ENCODE measurements at regions of chr3 and their contacts with region 1.

Region 1: GRCh38 chr3:15629860-15630597 is 28.5 kb downstream of the BTD start:
- DNase-seq: peak in 4 of 5 donors; percentile 40 to 61 (median 52)
- ATAC-seq: peak; percentile 73 to 95 (median 92)
- H3K4me3 ChIP-seq: peak overlapping the region in 9 of 12 donors; percentile 10 to 46 (median 30)
- H3K27ac ChIP-seq: peak overlapping the region in 7 of 12 donors; percentile 35 to 65 (median 48)
- H3K4me1 ChIP-seq: peaks cover 0 to 31% (median 20%) of the 10 kb centered on the region in 12 donors
- H3K27me3 ChIP-seq: no peaks in the 10 kb centered on the region
- CTCF ChIP-seq: peak; percentile 54 to 87 (median 79)
- POLR2A ChIP-seq: no peak

Region 2: DNA sequence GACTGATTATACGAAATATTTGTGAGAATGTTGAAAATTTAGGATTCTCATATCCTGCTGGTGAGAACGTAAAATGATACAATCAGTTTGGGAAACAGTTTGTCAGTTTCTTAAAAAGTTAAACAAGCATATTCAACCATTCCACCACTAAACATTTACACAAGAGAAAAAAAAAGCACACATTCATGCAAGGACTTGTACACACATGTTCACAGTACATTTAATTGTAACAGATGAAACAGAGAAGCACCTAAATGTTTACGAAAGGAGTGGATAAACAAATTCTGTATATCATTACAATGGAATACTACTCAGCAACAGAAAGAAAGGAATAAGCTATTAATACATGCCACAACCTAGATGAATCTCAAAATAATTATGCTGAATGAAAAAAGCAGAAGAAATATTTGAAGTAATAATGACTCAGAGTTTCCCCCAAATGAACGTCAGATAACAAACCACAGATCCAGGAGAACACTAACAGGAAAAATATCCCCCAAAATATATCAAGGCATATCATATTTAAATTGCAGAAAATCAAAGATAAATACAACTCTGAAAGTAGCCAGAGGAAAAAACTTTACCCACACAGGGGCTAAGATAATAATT is 153.4 kb after region 1 on chr3:
- intact Hi-C with region 1: no loop called
- DNase-seq: no peak
- ATAC-seq: no peak
- H3K4me3 ChIP-seq: peak overlapping the region in 1 of 12 donors; percentile 23
- H3K27ac ChIP-seq: no peak overlapping the region
- H3K4me1 ChIP-seq: peaks cover 0 to 16% (median 8%) of the 10 kb centered on the region in 12 donors
- H3K27me3 ChIP-seq: no peaks in the 10 kb centered on the region
- CTCF ChIP-seq: no peak
- POLR2A ChIP-seq: no peak

Region 3: DNA sequence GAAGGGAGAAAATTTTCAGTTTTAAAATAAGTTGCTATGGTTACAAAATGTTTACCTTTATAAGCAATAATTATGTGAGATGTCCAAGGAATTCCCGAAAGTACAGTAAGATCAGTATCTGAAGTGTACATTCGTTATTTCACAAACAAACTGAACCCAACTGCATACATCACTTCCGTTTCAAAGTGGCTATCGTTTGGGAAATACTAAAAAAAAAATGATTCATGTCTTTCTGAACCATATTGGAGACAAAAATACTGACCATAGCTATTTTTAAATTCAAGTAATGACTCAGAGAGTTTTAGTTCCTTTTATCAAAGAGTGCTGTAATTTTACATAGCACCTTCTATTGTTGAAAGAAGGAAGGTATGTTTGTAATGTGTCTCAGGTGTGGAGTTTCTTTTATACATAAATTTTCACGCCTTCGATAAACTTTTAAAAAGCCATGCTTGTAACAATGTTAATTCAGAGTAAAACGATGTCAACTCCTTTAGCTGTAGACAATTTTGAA is 175.8 kb after region 1 on chr3:
- intact Hi-C with region 1: loop called in 9 of 10 experiments (anchors 1 to 5 kb)
- DNase-seq: no peak
- ATAC-seq: peak in 3 of 4 donors; percentile 34 to 37 (median 36)
- H3K4me3 ChIP-seq: peak overlapping the region in 1 of 12 donors; percentile 2
- H3K27ac ChIP-seq: peak overlapping the region in 2 of 12 donors; percentile 13 to 56
- H3K4me1 ChIP-seq: peaks cover 0 to 44% (median 13%) of the 10 kb centered on the region in 12 donors
- H3K27me3 ChIP-seq: no peaks in the 10 kb centered on the region
- CTCF ChIP-seq: no peak
- POLR2A ChIP-seq: no peak

Region 4: DNA sequence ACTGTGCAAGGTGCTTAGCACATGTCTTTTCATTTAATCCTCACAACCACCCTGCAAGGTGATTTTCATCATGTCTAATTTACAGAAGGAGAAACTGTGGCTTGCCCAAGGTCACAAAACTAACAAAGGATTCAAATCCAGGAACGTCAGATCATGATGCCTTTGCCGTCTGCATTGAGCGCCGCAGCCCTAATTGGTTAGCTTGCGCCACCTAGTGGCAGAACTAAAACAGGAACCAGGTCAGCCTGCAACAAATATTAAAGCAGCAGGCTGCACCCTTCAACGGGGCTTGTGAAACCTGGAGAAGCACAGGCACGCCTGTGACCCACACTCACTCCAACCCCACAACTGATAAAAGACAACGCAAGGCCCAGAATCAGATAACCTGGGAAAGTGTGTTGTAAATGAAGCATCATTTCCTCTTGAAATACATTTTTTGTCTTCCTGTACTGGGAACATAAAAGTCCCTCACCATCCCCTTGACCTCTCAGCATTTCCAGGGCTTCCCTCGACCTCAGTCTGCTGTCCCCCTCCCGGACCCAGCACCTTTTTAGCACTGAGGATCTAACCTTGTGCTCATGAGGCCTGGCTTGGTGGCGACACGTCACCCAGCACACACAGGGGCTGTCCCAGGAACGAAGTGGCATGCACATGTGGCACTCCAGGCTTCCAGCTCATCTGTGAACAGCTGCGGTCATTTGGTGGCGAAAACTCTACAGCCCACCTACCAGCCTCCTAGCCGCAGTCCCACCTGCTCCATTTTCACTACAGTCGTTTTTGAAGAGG is 617.4 kb after region 1 on chr3:
- intact Hi-C with region 1: loop called in 8 of 10 experiments (anchors 5 to 10 kb)
- DNase-seq: peak; percentile 75 to 86 (median 79)
- ATAC-seq: peak; percentile 40 to 68 (median 65)
- H3K4me3 ChIP-seq: no peak overlapping the region
- H3K27ac ChIP-seq: no peak overlapping the region
- H3K4me1 ChIP-seq: peaks cover 0 to 28% (median 13%) of the 10 kb centered on the region in 12 donors
- H3K27me3 ChIP-seq: no peaks in the 10 kb centered on the region
- CTCF ChIP-seq: peak; percentile 85 to 98 (median 94)
- POLR2A ChIP-seq: no peak

Measured in heart left ventricle (tissue), 16 donors.